ENCODE measurements at regions of chr11 and their contacts with region 1.

Region 1: GRCh38 chr11:111454561-111455192 is 57.5 kb downstream of the BTG4 start:
- DNase-seq: peak in 1 of 2 experiments; percentile 48
- H3K4me3 ChIP-seq: no peak overlapping the region
- H3K27ac ChIP-seq: no peak overlapping the region
- H3K4me1 ChIP-seq: no peaks in the 10 kb centered on the region
- H3K27me3 ChIP-seq: no peaks in the 10 kb centered on the region
- CTCF ChIP-seq: peak; percentile 58

Region 2: DNA sequence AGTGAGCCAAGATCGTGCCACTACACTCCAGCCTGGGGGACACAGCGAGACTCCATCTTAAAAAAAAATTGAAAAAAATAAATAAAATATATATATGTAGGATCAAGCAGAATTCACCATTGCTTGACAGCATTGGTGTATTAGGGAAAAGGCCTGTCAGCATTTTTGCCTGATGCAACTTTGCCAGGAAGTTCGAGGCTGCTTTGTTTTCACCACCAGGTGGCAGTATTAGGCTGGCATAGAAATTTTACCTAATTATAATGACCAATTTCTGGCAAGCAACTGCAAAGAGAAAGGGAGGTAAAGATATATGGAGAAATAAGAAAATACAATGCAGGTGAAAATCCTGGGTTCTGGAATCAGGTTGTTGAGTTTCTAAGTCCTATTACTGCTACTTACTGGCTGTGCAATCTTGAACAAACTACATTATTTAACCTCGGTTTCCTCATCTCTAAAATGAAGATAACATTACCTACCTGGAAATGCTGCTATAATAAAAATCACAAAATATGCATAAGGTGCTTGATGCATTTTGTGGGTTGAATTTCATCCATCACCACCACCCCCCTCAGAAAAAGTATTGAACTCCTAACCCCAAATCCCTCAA is 110.5 kb after region 1 on chr11:
- CTCF ChIA-PET with region 1: no interaction called
- POLR2A ChIA-PET with region 1: no interaction called
- intact Hi-C with region 1: loop called (anchors 5 kb)
- DNase-seq: peak; percentile 60 to 74
- H3K4me3 ChIP-seq: no peak overlapping the region
- H3K27ac ChIP-seq: no peak overlapping the region
- H3K4me1 ChIP-seq: peaks cover 28% of the 10 kb centered on the region
- H3K27me3 ChIP-seq: no peaks in the 10 kb centered on the region
- CTCF ChIP-seq: peak; percentile 93

Region 3: GRCh38 chr11:111586388-111586831 is 131.7 kb after region 1 on chr11:
- CTCF ChIA-PET with region 1: no interaction called
- POLR2A ChIA-PET with region 1: no interaction called
- intact Hi-C with region 1: loop called (anchors 5 kb)
- DNase-seq: peak; percentile 21 to 56
- H3K4me3 ChIP-seq: no peak overlapping the region
- H3K27ac ChIP-seq: no peak overlapping the region
- H3K4me1 ChIP-seq: no peaks in the 10 kb centered on the region
- H3K27me3 ChIP-seq: no peaks in the 10 kb centered on the region
- CTCF ChIP-seq: peak; percentile 85

Region 4: GRCh38 chr11:111601979-111602864 is 147.5 kb after region 1 on chr11 and contains the start of gene SIK2:
- CTCF ChIA-PET with region 1: no interaction called
- POLR2A ChIA-PET with region 1: no interaction called
- intact Hi-C with region 1: loop called (anchors 1 kb)
- DNase-seq: peak; percentile 90 to 95
- H3K4me3 ChIP-seq: peak within 1 kb of the TSS; percentile 89
- H3K27ac ChIP-seq: peak within 1 kb of the TSS; percentile 60
- H3K4me1 ChIP-seq: peaks cover 43% of the 10 kb centered on the region
- H3K27me3 ChIP-seq: no peaks in the 10 kb centered on the region
- CTCF ChIP-seq: peak; percentile 78
- total RNA-seq, gene SIK2: 16.2 and 16.6 TPM in 2 replicates

Region 5: GRCh38 chr11:111797145-111797581 is 342.5 kb after region 1 on chr11:
- CTCF ChIA-PET with region 1: no interaction called
- POLR2A ChIA-PET with region 1: no interaction called
- intact Hi-C with region 1: no loop called
- DNase-seq: peak; percentile 2 to 59
- H3K4me3 ChIP-seq: no peak overlapping the region
- H3K27ac ChIP-seq: no peak overlapping the region
- H3K4me1 ChIP-seq: peaks cover 27% of the 10 kb centered on the region
- H3K27me3 ChIP-seq: no peaks in the 10 kb centered on the region
- CTCF ChIP-seq: no peak

Region 6: GRCh38 chr11:111841370-111842053 is 386.8 kb after region 1 on chr11:
- CTCF ChIA-PET with region 1: no interaction called
- POLR2A ChIA-PET with region 1: no interaction called
- intact Hi-C with region 1: loop called (anchors 1 kb)
- DNase-seq: peak; percentile 72 to 84
- H3K4me3 ChIP-seq: no peak overlapping the region
- H3K27ac ChIP-seq: peak overlapping the region; percentile 50
- H3K4me1 ChIP-seq: peaks cover 79% of the 10 kb centered on the region
- H3K27me3 ChIP-seq: no peaks in the 10 kb centered on the region
- CTCF ChIP-seq: peak; percentile 98